ENCODE measurements at regions of chr17 and their contacts with region 1.

Region 1: GRCh38 chr17:79400989-79401703 is 209.7 kb downstream of the RBFOX3 start:
- DNase-seq: peak; percentile 82
- H3K4me3 Mint-ChIP-seq: peak overlapping the region; percentile 56
- H3K27ac Mint-ChIP-seq: peak overlapping the region; percentile 34
- H3K4me1 Mint-ChIP-seq: peaks cover 12% of the 10 kb centered on the region
- H3K27me3 Mint-ChIP-seq: peaks cover 38% of the 10 kb centered on the region

Region 2: GRCh38 chr17:79707931-79708891 is 307.1 kb after region 1 on chr17:
- CTCF ChIA-PET with region 1: no interaction called
- POLR2A ChIA-PET with region 1: interaction called, 3 read pairs
- intact Hi-C with region 1: loop called (anchors 5 kb)
- DNase-seq: peak; percentile 69
- H3K4me3 Mint-ChIP-seq: no peak overlapping the region
- H3K27ac Mint-ChIP-seq: no peak overlapping the region
- H3K4me1 Mint-ChIP-seq: no peaks in the 10 kb centered on the region
- H3K27me3 Mint-ChIP-seq: peaks cover 4% of the 10 kb centered on the region